Panc1 (cell line): ENCODE measurements at regions of chr4 and their contacts with region 1.

Region 1: GRCh38 chr4:93791570-93792195 is 36.9 kb upstream of the ATOH1 start:
- DNase-seq: peak; percentile 20
- ATAC-seq: peak; percentile 68; the same call in 1 of the 2 replicates
- H3K4me3 ChIP-seq: no peak overlapping the region
- H3K27ac ChIP-seq: no peak overlapping the region
- H3K4me1 ChIP-seq: no peaks in the 10 kb centered on the region
- H3K27me3 ChIP-seq: no peaks in the 10 kb centered on the region
- CTCF ChIP-seq: peak; percentile 79

Region 2: DNA sequence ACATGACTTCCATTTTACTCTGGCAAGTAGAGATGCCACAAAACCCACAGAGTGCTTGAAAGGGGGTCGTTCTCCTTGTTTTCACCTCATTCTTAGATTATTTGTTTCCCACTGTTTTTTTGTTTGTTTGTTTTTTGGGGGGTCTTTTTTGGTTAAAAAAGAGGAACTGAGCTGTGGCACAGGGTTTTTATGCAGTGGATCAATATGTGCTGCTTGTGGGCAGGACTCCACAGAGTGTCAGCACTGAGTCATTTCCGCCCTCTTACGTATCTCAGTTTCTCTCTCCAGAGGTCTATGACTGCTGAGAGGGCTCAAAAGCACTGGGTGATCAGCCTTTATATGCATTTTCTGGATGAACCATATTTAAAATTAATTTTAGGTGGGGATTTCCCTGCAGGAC is 1756.0 kb before region 1 on chr4:
- CTCF ChIA-PET with region 1: no interaction called
- POLR2A ChIA-PET with region 1: no interaction called
- in situ Hi-C with region 1: no loop called
- intact Hi-C with region 1: no loop called
- DNase-seq: no peak
- ATAC-seq: no peak
- H3K4me3 ChIP-seq: no peak overlapping the region
- H3K27ac ChIP-seq: no peak overlapping the region
- H3K4me1 ChIP-seq: no peaks in the 10 kb centered on the region
- H3K27me3 ChIP-seq: no peaks in the 10 kb centered on the region
- CTCF ChIP-seq: no peak

Region 3: DNA sequence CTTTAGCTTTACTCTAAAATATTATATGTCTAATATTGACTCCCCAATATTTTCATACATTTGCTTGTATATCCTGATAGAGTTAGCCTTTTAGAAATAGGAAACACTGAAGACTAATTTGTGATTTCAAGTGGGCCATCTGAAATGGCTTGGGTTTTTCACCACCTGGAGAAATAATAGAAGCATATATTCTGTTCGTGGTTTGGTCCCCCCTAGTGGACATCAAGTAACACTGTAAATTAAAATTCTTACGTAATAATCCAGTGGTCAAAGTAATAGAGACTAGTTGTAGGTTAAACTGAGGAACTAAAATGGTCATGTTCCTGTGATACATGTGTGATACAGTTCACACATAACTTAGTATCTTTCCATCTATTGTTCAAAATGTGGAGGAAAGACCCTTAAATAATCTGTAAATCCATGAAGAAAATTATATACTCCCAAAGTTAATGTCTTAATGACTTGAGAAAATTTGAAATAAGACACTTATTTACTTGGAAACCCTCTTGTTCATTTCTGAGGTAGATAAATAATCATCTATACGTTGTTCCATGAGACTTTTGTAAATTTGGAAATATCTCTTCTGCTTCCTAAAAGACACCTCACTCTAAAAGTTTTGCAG is 336.1 kb after region 1 on chr4:
- CTCF ChIA-PET with region 1: no interaction called
- POLR2A ChIA-PET with region 1: no interaction called
- in situ Hi-C with region 1: no loop called
- intact Hi-C with region 1: loop called (anchors 2 kb)
- DNase-seq: no peak
- ATAC-seq: peak; percentile 65; the same call in 1 of the 2 replicates
- H3K4me3 ChIP-seq: no peak overlapping the region
- H3K27ac ChIP-seq: no peak overlapping the region
- H3K4me1 ChIP-seq: no peaks in the 10 kb centered on the region
- H3K27me3 ChIP-seq: 0 out of 2 replicates have a peak, but pooled peaks cover 3% of the 10 kb centered on the region
- CTCF ChIP-seq: peak; percentile 58; the same call in 1 of the 2 replicates

Region 4: DNA sequence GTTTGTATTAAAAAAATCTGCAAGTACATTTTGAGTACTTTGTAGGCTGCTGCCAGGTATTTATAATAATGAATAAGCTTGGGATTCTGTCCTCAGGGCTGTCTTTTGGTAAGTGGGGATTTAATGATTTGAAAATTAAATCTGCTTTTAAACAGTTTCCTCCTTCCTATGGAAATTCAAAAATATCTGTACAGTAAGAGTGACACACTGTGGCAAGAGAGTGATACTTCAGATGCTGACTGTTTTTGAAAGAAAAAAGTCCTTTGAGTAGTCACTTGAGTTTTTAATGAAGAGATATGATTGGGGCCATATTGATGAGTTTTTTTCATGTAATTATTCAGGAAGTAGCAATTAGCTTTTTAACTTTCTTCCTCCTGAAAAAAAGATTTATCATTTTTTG is 465.1 kb after region 1 on chr4:
- CTCF ChIA-PET with region 1: no interaction called
- POLR2A ChIA-PET with region 1: no interaction called
- in situ Hi-C with region 1: no loop called
- intact Hi-C with region 1: loop called (anchors 2 kb)
- DNase-seq: no peak
- ATAC-seq: no peak
- H3K4me3 ChIP-seq: no peak overlapping the region
- H3K27ac ChIP-seq: no peak overlapping the region
- H3K4me1 ChIP-seq: no peaks in the 10 kb centered on the region
- H3K27me3 ChIP-seq: no peaks in the 10 kb centered on the region
- CTCF ChIP-seq: no peak; the same call in 1 of the 2 replicates

Region 5: GRCh38 chr4:94390804-94391410 is 599.2 kb after region 1 on chr4:
- CTCF ChIA-PET with region 1: no interaction called
- POLR2A ChIA-PET with region 1: no interaction called
- in situ Hi-C with region 1: no loop called
- intact Hi-C with region 1: loop called (anchors 5 kb)
- DNase-seq: no peak
- ATAC-seq: no peak
- H3K4me3 ChIP-seq: no peak overlapping the region
- H3K27ac ChIP-seq: no peak overlapping the region
- H3K4me1 ChIP-seq: no peaks in the 10 kb centered on the region
- H3K27me3 ChIP-seq: 0 out of 2 replicates have a peak, but pooled peaks cover 2% of the 10 kb centered on the region
- CTCF ChIP-seq: peak; percentile 45; the same call in 1 of the 2 replicates